Cardiac septum (tissue), 1 donor: ENCODE measurements at regions of chr6 and their contacts with region 1.

Region 1: GRCh38 chr6:27838058-27838944 is 73.9 kb downstream of the OR2B2 start:
- DNase-seq: peak; percentile 88

Region 2: GRCh38 chr6:26223650-26224546 is 1614.4 kb before region 1 on chr6:
- intact Hi-C with region 1: loop called (anchors 10 kb)
- DNase-seq: peak; percentile 83

Region 3: GRCh38 chr6:27864906-27865849 is 26.9 kb after region 1 on chr6:
- intact Hi-C with region 1: loop called (anchors 2 kb)
- DNase-seq: peak; percentile 78